CD8-positive, alpha-beta T cell (primary cell): ENCODE measurements at regions of chr14 and their contacts with region 1.

Region 1: DNA sequence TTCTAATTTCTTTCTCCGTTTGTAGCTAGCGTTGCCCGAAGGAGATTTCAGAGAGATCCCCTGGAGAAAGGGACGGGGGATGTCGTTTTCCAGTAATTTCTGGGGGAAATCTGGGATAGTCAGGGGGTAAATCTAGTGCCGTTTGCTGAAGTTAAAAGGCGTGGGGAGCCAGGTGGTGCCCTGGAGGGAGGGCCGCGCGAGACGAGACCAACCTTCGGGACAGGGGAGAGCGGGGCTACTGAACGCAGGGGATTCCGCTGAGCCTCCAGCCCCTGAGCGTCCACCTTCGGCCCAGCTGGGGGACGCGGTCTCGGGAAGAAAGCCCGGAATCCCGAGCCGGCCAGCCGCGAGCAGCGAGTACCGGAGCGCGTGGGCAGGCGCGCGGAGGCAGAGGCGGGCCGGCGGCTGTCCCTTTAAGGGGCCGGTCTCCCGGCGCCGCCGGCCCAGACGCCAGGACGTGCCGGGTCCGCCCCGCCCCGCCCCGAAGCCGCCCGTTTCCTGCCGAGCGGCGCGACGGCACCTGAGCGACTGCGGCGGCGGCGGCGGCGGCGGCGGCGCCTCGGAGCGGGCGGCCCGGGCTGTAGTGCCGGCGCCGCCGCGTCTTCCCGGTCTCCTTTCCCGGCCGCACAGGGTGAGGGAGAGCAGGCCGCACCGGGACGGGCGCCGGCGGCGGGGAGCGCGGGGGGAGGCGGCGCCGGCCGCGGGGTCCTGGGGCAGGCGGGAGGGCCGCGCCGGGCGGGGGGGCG is at the start of gene KTN1:
- DNase-seq: peak; percentile 68 to 92 (median 84)
- ATAC-seq: peak; percentile 86
- H3K4me3 ChIP-seq: peak within 1 kb of the TSS; percentile 89 to 95
- H3K4me3 Mint-ChIP-seq: peak within 1 kb of the TSS; percentile 96
- H3K27ac ChIP-seq: peak within 1 kb of the TSS; percentile 77
- H3K27ac Mint-ChIP-seq: peak within 1 kb of the TSS; percentile 95
- H3K4me1 ChIP-seq: peaks cover 41% of the 10 kb centered on the region
- H3K4me1 Mint-ChIP-seq: peaks cover 30% of the 10 kb centered on the region
- H3K27me3 ChIP-seq: no peaks in the 10 kb centered on the region
- H3K27me3 Mint-ChIP-seq: no peaks in the 10 kb centered on the region
- CTCF ChIP-seq: no peak
- total RNA-seq, gene KTN1: 64.2 to 74.5 TPM

Region 2: DNA sequence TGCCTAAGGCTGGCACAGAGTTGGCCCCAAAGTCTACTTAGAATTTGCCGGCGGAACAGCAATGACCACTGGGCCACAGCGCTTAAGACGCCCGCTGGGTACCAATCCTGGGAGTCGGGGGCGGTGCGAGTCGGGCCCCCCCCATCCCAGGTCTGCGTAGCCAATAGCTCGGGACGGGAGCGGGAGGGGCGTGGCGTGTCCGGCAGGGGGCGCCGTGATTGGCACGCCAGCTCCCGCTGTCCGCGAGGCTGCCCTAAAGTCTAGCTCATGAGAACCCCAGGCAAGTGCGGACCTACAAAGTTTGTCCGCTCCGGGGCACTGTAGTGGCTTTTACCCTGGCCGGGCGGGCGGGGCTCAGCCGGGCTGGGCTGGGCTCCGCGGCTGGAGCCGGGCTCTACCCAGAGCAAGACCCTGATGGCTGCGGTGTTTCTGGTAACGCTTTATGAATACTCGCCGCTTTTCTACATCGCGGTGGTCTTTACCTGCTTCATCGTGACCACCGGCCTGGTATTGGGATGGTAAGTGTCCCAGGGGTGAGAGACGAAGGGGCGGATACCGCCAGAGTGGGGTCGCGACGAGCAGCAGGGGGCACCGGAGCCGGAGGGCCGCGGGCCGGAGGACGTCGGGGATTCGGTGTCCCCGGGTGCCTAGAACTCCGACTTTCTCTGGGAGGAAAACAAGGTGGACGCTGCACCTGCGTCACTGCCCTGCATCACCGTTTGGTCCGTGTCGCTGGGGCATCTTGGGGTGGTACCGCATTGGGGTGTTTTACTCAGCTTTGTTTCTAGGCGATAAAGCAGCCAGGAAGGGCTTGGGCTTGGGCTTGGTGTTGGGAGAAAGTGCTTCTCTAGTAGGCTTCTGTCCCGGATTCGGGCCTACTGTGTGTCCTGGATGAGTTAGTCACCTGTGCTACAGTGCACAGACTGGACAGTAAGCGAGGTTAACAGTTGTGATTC is 1070.1 kb before region 1 on chr14 and contains the start of gene CGRRF1:
- CTCF ChIA-PET with region 1: no interaction called
- POLR2A ChIA-PET with region 1: no interaction called
- intact Hi-C with region 1: loop called in 1 of 2 experiments (anchors 5 kb)
- DNase-seq: peak; percentile 90 to 98 (median 96)
- ATAC-seq: peak; percentile 95
- H3K4me3 ChIP-seq: peak within 1 kb of the TSS; percentile 92 to 99
- H3K4me3 Mint-ChIP-seq: peak within 1 kb of the TSS; percentile 96
- H3K27ac ChIP-seq: peak within 1 kb of the TSS; percentile 73 to 92
- H3K27ac Mint-ChIP-seq: peak within 1 kb of the TSS; percentile 92
- H3K4me1 ChIP-seq: peaks cover 31% of the 10 kb centered on the region
- H3K4me1 Mint-ChIP-seq: peaks cover 51% of the 10 kb centered on the region
- H3K27me3 ChIP-seq: no peaks in the 10 kb centered on the region
- H3K27me3 Mint-ChIP-seq: peaks cover 4% of the 10 kb centered on the region
- CTCF ChIP-seq: peak; percentile 64
- total RNA-seq, gene CGRRF1: 59.6 to 59.9 TPM

Region 3: GRCh38 chr14:55051426-55052268 is 528.2 kb before region 1 on chr14 and contains the start of gene MAPK1IP1L:
- CTCF ChIA-PET with region 1: no interaction called
- POLR2A ChIA-PET with region 1: no interaction called
- intact Hi-C with region 1: loop called (anchors 5 to 10 kb)
- DNase-seq: peak; percentile 83 to 94 (median 89)
- ATAC-seq: peak; percentile 94
- H3K4me3 ChIP-seq: peak within 1 kb of the TSS; percentile 99 to 100
- H3K4me3 Mint-ChIP-seq: peak within 1 kb of the TSS; percentile 88
- H3K27ac ChIP-seq: peak within 1 kb of the TSS; percentile 100
- H3K27ac Mint-ChIP-seq: peak within 1 kb of the TSS; percentile 94
- H3K4me1 ChIP-seq: peaks cover 27% of the 10 kb centered on the region
- H3K4me1 Mint-ChIP-seq: peaks cover 47% of the 10 kb centered on the region
- H3K27me3 ChIP-seq: no peaks in the 10 kb centered on the region
- H3K27me3 Mint-ChIP-seq: no peaks in the 10 kb centered on the region
- CTCF ChIP-seq: peak; percentile 100
- total RNA-seq, gene MAPK1IP1L: 207 to 212 TPM

Region 4: GRCh38 chr14:55600784-55601561 is 21.1 kb after region 1 on chr14:
- CTCF ChIA-PET with region 1: no interaction called
- POLR2A ChIA-PET with region 1: no interaction called
- intact Hi-C with region 1: loop called in 1 of 2 experiments (anchors 2 kb)
- DNase-seq: no peak
- ATAC-seq: no peak
- H3K4me3 ChIP-seq: no peak overlapping the region
- H3K4me3 Mint-ChIP-seq: no peak overlapping the region
- H3K27ac ChIP-seq: no peak overlapping the region
- H3K27ac Mint-ChIP-seq: no peak overlapping the region
- H3K4me1 ChIP-seq: peaks cover 10% of the 10 kb centered on the region
- H3K4me1 Mint-ChIP-seq: peaks cover 16% of the 10 kb centered on the region
- H3K27me3 ChIP-seq: no peaks in the 10 kb centered on the region
- H3K27me3 Mint-ChIP-seq: no peaks in the 10 kb centered on the region
- CTCF ChIP-seq: no peak

Region 5: DNA sequence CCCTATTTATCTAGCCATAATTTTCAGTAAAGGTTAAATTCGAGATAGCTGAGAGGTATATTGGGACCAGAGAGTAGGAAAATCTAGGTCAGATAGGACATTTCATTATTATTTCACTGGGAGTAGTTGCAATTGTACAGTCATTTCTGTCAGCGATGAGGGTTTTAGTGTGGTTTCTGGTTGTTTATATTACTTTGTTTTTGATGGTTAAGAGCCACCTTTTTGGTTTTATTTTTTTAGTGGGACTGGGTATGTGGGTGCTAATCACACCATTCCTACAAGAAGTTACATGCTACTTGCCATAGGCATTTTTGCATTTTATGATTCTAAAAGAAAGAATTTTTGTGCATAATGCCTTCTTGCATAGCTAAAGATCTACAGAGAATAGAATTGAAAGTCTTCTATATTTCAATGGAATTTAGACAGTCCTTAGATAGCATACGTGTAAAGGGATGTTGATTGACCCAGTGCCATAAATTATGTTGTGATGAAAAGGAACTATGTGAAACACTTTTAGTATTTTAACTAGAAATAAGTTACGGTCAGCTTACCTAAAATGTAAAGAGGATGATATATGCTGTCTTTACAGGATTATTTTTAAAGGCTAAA is 85.3 kb after region 1 on chr14:
- CTCF ChIA-PET with region 1: no interaction called
- POLR2A ChIA-PET with region 1: no interaction called
- intact Hi-C with region 1: no loop called
- DNase-seq: no peak
- ATAC-seq: no peak
- H3K4me3 ChIP-seq: no peak overlapping the region
- H3K4me3 Mint-ChIP-seq: no peak overlapping the region
- H3K27ac ChIP-seq: no peak overlapping the region
- H3K27ac Mint-ChIP-seq: peak overlapping the region; percentile 25
- H3K4me1 ChIP-seq: no peaks in the 10 kb centered on the region
- H3K4me1 Mint-ChIP-seq: peaks cover 11% of the 10 kb centered on the region
- H3K27me3 ChIP-seq: no peaks in the 10 kb centered on the region
- H3K27me3 Mint-ChIP-seq: no peaks in the 10 kb centered on the region
- CTCF ChIP-seq: no peak

Region 6: DNA sequence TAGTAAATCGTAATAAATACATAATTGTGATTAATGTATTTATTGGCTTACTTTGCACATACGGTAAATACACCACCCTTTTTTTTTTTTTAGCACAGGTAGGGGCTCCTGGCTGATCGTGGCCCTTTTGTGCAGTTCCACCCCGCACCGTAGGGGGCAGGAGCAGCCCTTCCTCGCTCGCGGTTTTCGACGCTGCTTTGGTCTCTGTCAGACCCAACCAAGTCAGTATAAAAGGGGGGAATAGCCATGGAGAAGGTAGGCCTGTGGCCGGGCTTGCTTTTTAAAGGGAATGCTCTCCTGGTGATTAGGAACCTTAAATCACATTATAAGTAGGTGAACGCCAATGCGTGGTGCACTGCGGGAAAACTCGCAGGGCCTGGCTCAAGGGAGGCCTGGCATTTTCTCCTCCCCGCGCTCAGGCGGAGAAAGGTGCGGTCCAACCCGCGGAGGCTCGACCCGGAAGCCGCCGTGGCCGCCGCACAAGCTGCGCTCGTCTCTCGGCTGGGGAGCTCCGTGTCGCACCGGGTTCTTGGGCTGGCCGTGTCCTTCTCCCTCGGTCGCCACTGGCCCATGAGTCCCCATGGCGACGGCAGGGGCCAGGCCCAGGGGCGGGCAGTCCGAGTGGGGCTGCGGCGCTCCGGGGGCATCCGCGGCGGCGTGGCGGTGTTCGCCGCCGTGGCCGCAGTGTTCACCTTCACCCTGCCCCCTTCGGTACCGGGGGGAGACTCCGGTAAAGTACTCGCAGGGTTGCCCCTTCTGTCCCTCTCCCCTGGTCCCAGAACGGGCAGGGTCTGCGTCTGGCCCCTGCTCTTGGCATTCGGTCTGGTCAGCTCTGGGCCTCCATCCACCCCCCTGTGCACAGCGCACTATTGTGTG is 999.7 kb after region 1 on chr14 and contains the start of gene TMEM260:
- CTCF ChIA-PET with region 1: no interaction called
- POLR2A ChIA-PET with region 1: no interaction called
- intact Hi-C with region 1: loop called (anchors 1 to 5 kb)
- DNase-seq: peak; percentile 84 to 95 (median 91)
- ATAC-seq: peak; percentile 93
- H3K4me3 ChIP-seq: peak within 1 kb of the TSS; percentile 74 to 83
- H3K4me3 Mint-ChIP-seq: peak within 1 kb of the TSS; percentile 90
- H3K27ac ChIP-seq: peak within 1 kb of the TSS; percentile 72 to 75
- H3K27ac Mint-ChIP-seq: peak within 1 kb of the TSS; percentile 94
- H3K4me1 ChIP-seq: peaks cover 27% of the 10 kb centered on the region
- H3K4me1 Mint-ChIP-seq: peaks cover 40% of the 10 kb centered on the region
- H3K27me3 ChIP-seq: no peaks in the 10 kb centered on the region
- H3K27me3 Mint-ChIP-seq: peaks cover 2% of the 10 kb centered on the region
- CTCF ChIP-seq: peak; percentile 82
- total RNA-seq, gene TMEM260: 4.3 to 6.4 TPM